ENCODE measurements at regions of chr16 and their contacts with region 1.

Region 1: DNA sequence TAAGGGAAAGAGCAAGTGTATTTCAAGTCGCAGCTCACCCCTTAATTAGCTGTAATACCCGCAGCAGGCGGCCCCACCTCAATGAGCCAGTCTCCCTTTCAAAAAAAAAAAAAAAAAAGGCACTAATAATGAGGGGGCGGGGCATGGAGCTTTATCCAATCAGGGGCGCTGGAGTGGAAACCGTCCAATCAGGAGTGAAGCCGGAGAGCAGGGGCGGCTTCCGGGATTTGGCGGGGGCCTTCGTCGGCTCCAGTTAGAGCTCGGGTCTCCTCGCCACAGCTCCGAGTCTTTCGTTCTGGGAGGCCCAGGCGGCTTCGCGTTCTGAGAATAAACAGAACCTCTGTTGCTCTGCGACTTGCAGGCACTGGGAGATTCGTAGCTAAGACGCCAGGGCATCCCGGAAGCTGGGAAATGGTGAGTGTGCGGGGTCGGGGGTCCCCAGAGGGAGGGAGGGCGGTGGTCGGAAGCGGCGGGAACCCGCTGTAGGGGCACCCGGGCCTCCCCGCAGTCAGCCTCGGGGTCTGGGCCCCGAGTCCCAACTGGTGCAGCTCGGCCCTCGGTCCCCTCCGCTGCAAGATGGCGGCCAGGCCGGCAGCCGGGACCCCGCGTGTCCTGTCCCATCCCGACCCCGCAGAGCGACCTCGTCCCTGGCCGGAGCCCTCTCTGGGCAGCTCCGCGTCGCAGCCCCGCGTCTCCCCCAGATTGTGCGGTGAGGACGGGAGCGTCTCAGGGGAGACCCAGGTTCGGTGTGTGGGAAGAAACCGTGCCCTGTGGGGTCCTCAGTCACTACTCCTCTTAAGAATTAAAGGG is at the start of gene ZNF267:
- DNase-seq: peak; percentile 96
- ATAC-seq: peak; percentile 98
- total RNA-seq, gene ZNF267: 4.4 TPM

Region 2: DNA sequence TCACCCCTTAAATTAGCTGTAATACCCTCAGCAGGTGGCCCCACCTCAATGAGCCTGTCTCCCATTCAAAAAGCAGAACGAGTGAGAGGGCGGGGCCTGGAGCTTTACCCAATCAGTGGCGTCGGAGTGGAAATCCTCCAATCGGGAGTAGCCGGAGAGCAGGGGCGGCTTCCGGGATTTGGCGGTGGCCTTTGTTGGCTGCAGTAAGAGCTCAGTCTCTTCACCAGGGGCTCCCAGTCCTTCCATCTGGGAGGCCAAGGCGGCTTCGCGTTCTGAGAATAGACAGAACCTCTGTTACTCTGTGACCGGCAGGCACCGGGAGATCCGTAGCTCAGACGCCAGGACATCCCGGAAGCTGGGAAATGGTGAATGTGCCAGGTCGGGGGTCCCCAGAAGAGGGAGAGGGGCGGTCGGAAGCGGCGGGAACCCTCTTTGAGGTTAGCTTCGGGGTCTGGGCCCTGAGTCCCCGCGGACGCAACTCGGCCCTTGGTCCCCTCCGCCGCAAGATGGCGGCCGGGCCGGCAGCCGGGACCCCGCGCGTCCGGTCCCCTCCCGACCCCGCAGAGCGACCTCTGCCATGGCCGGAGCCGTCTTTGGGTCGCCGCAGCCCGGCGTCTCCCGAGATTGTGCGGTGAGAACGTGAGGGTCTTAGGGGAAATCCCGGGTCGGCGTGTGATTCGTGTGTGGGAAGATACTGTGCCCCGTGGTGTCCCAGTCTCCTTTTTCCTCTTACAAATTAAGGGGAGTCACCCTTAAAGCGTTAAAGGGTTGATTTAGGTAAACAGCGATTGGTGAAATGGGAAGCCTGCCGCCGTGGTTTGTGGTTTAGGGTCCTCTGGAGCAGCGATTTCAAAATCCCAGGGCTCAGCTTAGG is 160.5 kb before region 1 on chr16:
- intact Hi-C with region 1: loop called (anchors 10 kb)
- DNase-seq: peak; percentile 96
- ATAC-seq: peak; percentile 98

Measured in Right ventricle myocardium superior (tissue), 1 donor.